ENCODE measurements at regions of chr11 and their contacts with region 1.

Region 1: GRCh38 chr11:130434521-130435223 is 6.3 kb upstream of the ADAMTS8 start:
- DNase-seq: peak in 1 of 2 experiments; percentile 77
- H3K4me3 ChIP-seq: peak overlapping the region; percentile 40 to 83 (median 66); a peak in 7 of 8 replicates
- H3K27ac ChIP-seq: no peak overlapping the region
- H3K4me1 ChIP-seq: no peaks in the 10 kb centered on the region
- H3K27me3 ChIP-seq: peaks cover 0 to 9% (median 6%) of the 10 kb centered on the region in 4 experiments; a peak in 6 of 7 replicates
- CTCF ChIP-seq: peak; percentile 90 to 92 (median 91)
- EP300 ChIP-seq: no peak
- POLR2A ChIP-seq: no peak
- RAD21 ChIP-seq: peak; percentile 88 to 90

Region 2: DNA sequence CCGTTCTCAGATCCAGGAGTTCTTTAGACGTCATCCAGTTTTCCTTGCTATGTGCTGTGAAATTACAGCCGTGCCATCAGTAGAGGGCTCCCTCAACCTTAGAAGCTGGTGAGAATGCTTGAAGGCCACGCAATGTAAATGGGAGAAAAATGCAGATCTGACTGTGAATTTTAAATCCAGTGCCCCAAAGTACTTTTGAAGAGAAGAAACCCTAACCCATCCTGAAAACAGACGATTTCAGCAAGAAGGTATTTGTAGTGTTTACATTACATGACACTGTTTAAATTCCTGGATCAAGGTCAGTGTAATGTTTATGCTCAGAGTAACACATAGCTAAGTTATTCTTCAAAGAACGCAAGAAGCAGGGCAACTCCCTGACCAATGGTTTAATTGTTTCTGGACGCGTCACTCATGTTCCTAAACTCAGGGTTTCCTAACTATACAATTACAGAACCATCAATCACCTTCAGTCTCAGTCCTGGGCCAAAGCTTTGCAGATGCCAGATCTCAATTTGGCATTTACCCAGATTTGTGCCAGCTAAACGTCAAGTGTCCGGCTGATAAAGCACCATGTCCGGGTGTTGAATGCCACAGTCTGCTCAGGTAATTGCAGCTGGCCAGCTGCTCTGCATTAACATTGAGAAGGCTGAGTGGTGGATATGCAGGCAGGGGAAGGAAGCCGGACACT is 44.5 kb before region 1 on chr11:
- CTCF ChIA-PET with region 1: interaction called, 10 read pairs
- POLR2A ChIA-PET with region 1: no interaction called
- DNase-seq: no peak
- H3K4me3 ChIP-seq: no peak overlapping the region
- H3K27ac ChIP-seq: no peak overlapping the region
- H3K4me1 ChIP-seq: peaks cover 0 to 6% (median 1%) of the 10 kb centered on the region in 4 experiments; a peak in 3 of 7 replicates
- H3K27me3 ChIP-seq: no peaks in the 10 kb centered on the region; a peak in 1 of 7 replicates
- CTCF ChIP-seq: peak; percentile 1 to 61 (median 55)
- EP300 ChIP-seq: no peak
- POLR2A ChIP-seq: no peak
- RAD21 ChIP-seq: peak; percentile 63 to 71

Region 3: DNA sequence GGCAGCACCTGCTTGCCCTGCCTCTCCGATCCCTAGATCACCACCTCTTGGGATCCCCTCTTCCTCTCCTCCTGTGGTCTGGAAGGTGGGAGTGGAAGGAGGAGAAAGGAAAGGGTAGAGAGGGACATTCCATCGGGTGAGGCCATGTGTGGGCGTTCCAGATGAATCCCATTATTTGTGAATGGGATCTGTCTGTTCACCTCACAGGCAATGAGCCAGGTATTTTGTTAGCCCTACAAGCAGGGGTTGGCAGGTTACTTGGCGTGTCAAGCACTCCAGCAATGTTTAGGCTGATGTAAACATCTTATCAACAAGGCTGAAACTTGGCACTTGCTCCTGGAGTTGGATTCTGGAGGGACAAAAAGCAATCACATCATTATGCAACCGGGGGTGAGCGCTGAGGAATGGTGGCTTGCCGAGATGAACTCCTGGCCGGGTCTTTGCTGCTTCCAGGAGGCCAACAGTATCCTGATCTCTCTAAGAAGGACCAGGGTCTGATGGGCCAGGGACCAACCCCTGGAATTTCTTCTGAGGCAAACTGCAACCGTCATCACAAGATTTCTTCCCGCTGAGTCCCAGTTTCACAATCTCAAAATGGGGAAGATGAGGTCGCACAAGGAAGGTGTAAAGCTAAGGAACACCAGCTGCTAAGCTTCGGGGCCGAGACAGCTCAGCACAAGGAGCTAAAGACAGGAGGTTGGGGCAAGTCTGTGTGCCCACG is 14.0 kb before region 1 on chr11:
- CTCF ChIA-PET with region 1: interaction called, 31 read pairs
- POLR2A ChIA-PET with region 1: no interaction called
- DNase-seq: no peak
- H3K4me3 ChIP-seq: no peak overlapping the region
- H3K27ac ChIP-seq: no peak overlapping the region
- H3K4me1 ChIP-seq: no peaks in the 10 kb centered on the region; a peak in 1 of 7 replicates
- H3K27me3 ChIP-seq: no peaks in the 10 kb centered on the region; a peak in 1 of 7 replicates
- CTCF ChIP-seq: no peak
- EP300 ChIP-seq: no peak
- POLR2A ChIP-seq: no peak
- RAD21 ChIP-seq: no peak

Region 4: GRCh38 chr11:130499828-130500227 is 65.2 kb after region 1 on chr11:
- CTCF ChIA-PET with region 1: no interaction called
- POLR2A ChIA-PET with region 1: no interaction called
- DNase-seq: no peak
- H3K4me3 ChIP-seq: no peak overlapping the region
- H3K27ac ChIP-seq: no peak overlapping the region
- H3K4me1 ChIP-seq: no peaks in the 10 kb centered on the region
- H3K27me3 ChIP-seq: no peaks in the 10 kb centered on the region
- CTCF ChIP-seq: no peak
- EP300 ChIP-seq: no peak
- POLR2A ChIP-seq: no peak
- RAD21 ChIP-seq: no peak

Region 5: DNA sequence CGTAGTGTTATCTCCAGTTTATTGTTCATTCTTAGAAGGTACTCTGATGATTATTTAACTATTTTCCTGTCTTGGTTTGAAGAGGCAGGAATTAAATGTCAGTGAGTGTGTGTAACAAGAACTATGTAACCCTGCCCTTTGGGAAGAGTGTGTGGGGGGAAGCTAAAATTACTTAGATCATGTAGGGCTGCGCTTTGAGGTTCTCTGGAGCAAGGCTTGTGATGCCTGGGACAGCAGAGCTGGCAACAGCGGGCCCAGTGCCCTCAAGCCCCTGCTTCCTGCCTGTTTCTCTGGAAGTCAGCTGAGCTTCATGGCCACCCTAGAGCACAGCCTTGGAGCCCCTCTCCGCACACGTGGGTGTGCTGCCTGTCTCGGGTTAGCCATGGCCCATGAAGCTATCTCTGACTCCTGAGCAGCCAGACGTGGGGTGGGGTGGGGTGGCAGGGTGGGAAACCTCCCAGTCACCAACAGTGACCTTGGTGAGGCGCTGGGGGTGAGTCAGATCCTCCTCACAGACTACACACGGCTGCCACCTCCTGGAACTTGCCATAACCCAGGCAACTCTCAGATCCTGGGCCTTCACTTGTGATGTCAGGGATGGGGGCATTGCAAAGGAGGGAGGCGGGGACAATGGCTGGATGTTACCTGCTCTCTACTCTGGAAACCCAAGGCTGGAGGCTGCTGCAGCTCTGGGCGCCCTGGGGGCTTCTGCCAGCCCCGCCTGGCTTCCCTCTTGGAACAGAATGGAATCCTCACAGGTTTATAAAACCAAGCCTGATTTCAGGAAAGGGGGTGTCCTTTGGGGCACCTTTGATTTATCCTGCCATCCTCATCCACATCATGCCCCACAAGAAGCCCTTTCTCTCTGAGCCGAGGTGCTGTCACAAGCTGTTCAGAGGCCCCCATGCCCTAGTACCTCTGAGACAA is 393.0 kb after region 1 on chr11:
- CTCF ChIA-PET with region 1: interaction called, 64 read pairs
- POLR2A ChIA-PET with region 1: no interaction called
- DNase-seq: peak; percentile 66 to 69
- H3K4me3 ChIP-seq: no peak overlapping the region
- H3K27ac ChIP-seq: no peak overlapping the region
- H3K4me1 ChIP-seq: peaks cover 0 to 10% (median 2%) of the 10 kb centered on the region in 4 experiments; a peak in 4 of 7 replicates
- H3K27me3 ChIP-seq: no peaks in the 10 kb centered on the region
- CTCF ChIP-seq: peak; percentile 73 to 85 (median 79)
- EP300 ChIP-seq: no peak
- POLR2A ChIP-seq: no peak
- RAD21 ChIP-seq: peak; percentile 91 to 93

Region 6: DNA sequence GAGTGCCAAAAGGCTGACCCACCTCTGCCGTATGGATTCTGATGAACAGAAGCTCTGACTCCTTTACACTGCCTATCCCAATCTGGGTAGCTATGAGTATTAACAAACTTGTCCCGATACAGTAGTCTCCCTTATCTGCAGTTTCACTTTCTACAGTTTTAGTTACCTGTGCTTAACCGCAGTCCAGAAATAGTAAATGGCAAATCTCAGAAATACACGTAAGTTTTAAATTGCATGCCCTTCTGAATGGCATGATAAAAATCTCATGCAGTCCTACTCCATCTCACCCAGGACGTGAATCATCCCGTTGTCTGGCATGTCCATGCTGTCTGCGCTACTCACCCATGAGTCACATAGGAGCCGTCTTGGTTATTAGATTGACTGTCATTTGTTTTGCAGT is 412.8 kb after region 1 on chr11:
- CTCF ChIA-PET with region 1: interaction called, 50 read pairs
- POLR2A ChIA-PET with region 1: no interaction called
- DNase-seq: no peak
- H3K4me3 ChIP-seq: no peak overlapping the region
- H3K27ac ChIP-seq: no peak overlapping the region
- H3K4me1 ChIP-seq: peaks cover 0 to 3% (median 0%) of the 10 kb centered on the region in 4 experiments; a peak in 2 of 7 replicates
- H3K27me3 ChIP-seq: peaks cover 0 to 1% (median 0%) of the 10 kb centered on the region in 4 experiments; a peak in 2 of 7 replicates
- CTCF ChIP-seq: no peak
- EP300 ChIP-seq: no peak
- POLR2A ChIP-seq: no peak
- RAD21 ChIP-seq: no peak

Measured in H1 (cell line).